Posterior vena cava (tissue), 2 donors: ENCODE measurements at regions of chr13 and their contacts with region 1.

Region 1: GRCh38 chr13:56338421-56338820 is 802.3 kb upstream of the PRR20A start:
- DNase-seq: no peak

Region 2: DNA sequence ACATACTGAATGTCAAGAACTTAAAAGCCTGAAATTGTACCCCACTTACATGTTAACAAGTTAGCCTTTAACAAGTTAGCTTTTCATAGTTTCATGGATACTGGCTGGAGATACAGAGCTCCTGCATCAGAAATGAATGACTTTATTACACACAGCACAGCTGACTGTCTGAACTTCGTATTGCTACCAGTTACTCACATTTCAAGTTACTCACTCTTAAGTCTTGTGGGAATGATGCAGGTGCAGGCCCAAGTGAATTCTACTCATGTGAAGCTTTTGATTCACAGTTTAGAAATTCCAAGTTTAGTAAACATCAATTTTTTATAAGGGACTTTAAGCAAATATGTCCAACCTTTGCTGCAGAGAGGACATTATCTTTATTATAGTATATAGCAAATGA is 40.1 kb after region 1 on chr13:
- intact Hi-C with region 1: loop called in 1 of 2 experiments (anchors 2 kb)
- DNase-seq: no peak